ENCODE measurements at regions of chr19 and their contacts with region 1.

Region 1: GRCh38 chr19:43316592-43317319 is 36.7 kb upstream of the CD177 start:
- DNase-seq: peak; percentile 19 to 77 (median 40)
- ATAC-seq: peak; percentile 100
- H3K4me3 ChIP-seq: no peak overlapping the region
- H3K27ac ChIP-seq: no peak overlapping the region
- H3K4me1 ChIP-seq: no peaks in the 10 kb centered on the region
- H3K27me3 ChIP-seq: peaks cover 2 to 4% of the 10 kb centered on the region in 2 experiments; a peak in 1 of 5 replicates
- CTCF ChIP-seq: peak; percentile 83 to 89 (median 88)
- EP300 ChIP-seq: no peak
- POLR2A ChIP-seq: no peak
- RAD21 ChIP-seq: peak; percentile 51 to 71

Region 2: DNA sequence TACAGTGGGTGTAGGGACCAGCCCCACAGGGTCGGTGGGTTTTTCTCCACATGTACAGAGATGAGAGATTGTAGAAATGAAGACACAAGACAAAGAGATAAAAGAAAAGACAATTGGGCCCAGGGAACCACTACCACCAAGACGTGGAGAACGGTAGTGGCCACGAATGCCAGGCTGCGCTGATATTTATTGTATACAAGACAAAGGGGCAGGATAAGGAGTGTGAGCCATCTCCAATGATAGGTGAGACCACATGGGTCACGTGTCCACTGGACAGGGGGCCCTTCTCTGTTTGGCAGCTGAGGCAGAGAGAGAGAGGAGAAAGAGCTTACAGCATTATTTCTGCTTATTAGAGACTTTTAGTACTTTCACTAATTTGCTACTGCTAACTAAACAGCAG is 125.6 kb before region 1 on chr19:
- CTCF ChIA-PET with region 1: no interaction called
- POLR2A ChIA-PET with region 1: no interaction called
- in situ Hi-C with region 1: loop called (anchors 10 kb)
- intact Hi-C with region 1: no loop called
- DNase-seq: no peak
- ATAC-seq: no peak
- H3K4me3 ChIP-seq: no peak overlapping the region
- H3K27ac ChIP-seq: no peak overlapping the region
- H3K4me1 ChIP-seq: no peaks in the 10 kb centered on the region
- H3K27me3 ChIP-seq: no peaks in the 10 kb centered on the region
- CTCF ChIP-seq: no peak
- EP300 ChIP-seq: no peak
- POLR2A ChIP-seq: no peak
- RAD21 ChIP-seq: no peak

Region 3: DNA sequence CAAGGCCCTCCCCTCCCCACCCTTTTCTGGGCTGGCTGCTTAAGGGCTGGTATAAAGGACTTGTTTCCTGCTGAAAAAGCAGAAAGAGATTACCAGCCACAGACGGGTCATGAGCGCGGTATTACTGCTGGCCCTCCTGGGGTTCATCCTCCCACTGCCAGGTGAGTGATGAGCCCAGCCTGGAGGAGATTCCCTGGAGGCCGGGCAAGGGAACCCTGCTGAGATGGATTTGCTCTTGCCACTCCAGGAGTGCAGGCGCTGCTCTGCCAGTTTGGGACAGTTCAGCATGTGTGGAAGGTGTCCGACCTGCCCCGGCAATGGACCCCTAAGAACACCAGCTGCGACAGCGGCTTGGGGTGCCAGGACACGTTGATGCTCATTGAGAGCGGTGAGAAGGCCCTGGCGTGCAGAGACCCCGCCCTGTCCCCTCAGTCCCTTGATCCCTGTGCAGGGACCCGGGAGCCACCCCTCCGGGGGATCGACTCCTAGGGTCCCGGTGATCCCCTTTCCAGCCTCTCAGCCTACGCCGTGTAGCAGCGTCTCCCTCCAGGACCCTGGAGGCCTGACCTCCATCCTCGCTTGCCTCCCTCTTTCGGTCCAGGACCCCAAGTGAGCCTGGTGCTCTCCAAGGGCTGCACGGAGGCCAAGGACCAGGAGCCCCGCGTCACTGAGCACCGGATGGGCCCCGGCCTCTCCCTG is 37.0 kb after region 1 on chr19 and contains the start of gene CD177:
- CTCF ChIA-PET with region 1: no interaction called
- POLR2A ChIA-PET with region 1: no interaction called
- in situ Hi-C with region 1: no loop called
- intact Hi-C with region 1: no loop called
- DNase-seq: no peak
- ATAC-seq: peak; percentile 51; the same call in 2 of the 3 replicates
- H3K4me3 ChIP-seq: no peak within 1 kb of the TSS
- H3K27ac ChIP-seq: no peak within 1 kb of the TSS
- H3K4me1 ChIP-seq: no peaks in the 10 kb centered on the region; a peak in 2 of 5 replicates
- H3K27me3 ChIP-seq: peaks cover 0 to 19% of the 10 kb centered on the region in 2 experiments; a peak in 3 of 5 replicates
- CTCF ChIP-seq: no peak
- EP300 ChIP-seq: no peak
- POLR2A ChIP-seq: no peak
- RAD21 ChIP-seq: no peak
- polyA plus RNA-seq, gene CD177: not detected

Region 4: DNA sequence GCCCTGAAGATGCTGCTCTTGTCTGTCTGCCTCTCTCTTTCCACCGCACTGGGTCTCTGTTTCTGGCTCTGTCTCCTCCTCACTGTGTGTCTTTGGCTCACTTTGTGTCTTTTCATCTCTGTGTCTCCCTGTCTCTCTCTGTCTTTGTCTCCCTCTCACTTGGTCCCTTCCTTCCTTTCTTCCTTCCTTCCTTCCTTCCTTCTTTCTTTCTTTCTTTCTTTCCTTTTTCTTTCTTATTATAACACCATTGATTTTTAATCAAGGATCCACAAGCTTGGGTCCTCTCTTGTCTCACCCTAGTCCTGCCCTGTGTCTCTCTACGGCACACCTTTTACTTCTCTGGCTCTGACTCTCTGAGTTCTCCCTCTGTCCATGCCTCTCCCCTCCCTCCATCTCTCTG is 51.1 kb after region 1 on chr19:
- CTCF ChIA-PET with region 1: no interaction called
- POLR2A ChIA-PET with region 1: no interaction called
- in situ Hi-C with region 1: no loop called
- intact Hi-C with region 1: no loop called
- DNase-seq: no peak
- ATAC-seq: no peak
- H3K4me3 ChIP-seq: no peak overlapping the region
- H3K27ac ChIP-seq: no peak overlapping the region
- H3K4me1 ChIP-seq: no peaks in the 10 kb centered on the region
- H3K27me3 ChIP-seq: peaks cover 2 to 13% of the 10 kb centered on the region in 2 experiments; a peak in 3 of 5 replicates
- CTCF ChIP-seq: no peak
- EP300 ChIP-seq: no peak
- POLR2A ChIP-seq: no peak
- RAD21 ChIP-seq: no peak

Region 5: GRCh38 chr19:43414554-43414953 is 97.8 kb after region 1 on chr19 and contains the start of gene TEX101:
- CTCF ChIA-PET with region 1: no interaction called
- POLR2A ChIA-PET with region 1: no interaction called
- in situ Hi-C with region 1: no loop called
- intact Hi-C with region 1: no loop called
- DNase-seq: peak in 1 of 4 experiments; percentile 15
- ATAC-seq: no peak
- H3K4me3 ChIP-seq: no peak within 1 kb of the TSS
- H3K27ac ChIP-seq: no peak within 1 kb of the TSS
- H3K4me1 ChIP-seq: no peaks in the 10 kb centered on the region
- H3K27me3 ChIP-seq: peaks cover 0 to 14% of the 10 kb centered on the region in 2 experiments; a peak in 3 of 5 replicates
- CTCF ChIP-seq: no peak
- EP300 ChIP-seq: no peak
- POLR2A ChIP-seq: no peak
- RAD21 ChIP-seq: no peak
- polyA plus RNA-seq, gene TEX101: 0.10 to 0.14 TPM

Region 6: GRCh38 chr19:43425567-43426392 is 109.0 kb after region 1 on chr19:
- CTCF ChIA-PET with region 1: no interaction called
- POLR2A ChIA-PET with region 1: no interaction called
- in situ Hi-C with region 1: no loop called
- intact Hi-C with region 1: loop called (anchors 10 kb)
- DNase-seq: peak in 1 of 4 experiments; percentile 15
- ATAC-seq: peak; percentile 72
- H3K4me3 ChIP-seq: no peak overlapping the region
- H3K27ac ChIP-seq: no peak overlapping the region
- H3K4me1 ChIP-seq: no peaks in the 10 kb centered on the region; a peak in 1 of 5 replicates
- H3K27me3 ChIP-seq: peaks cover 6 to 8% of the 10 kb centered on the region in 2 experiments; a peak in 2 of 5 replicates
- CTCF ChIP-seq: peak; percentile 37 to 62 (median 53); a peak in 5 of 6 replicates
- EP300 ChIP-seq: no peak
- POLR2A ChIP-seq: no peak
- RAD21 ChIP-seq: peak; percentile 7 to 46; a peak in 2 of 4 replicates